Upper lobe of right lung (tissue), 1 donor: ENCODE measurements at regions of chr7 and their contacts with region 1.

Region 1: GRCh38 chr7:134605973-134606923 is 40.4 kb upstream of the BPGM start:
- DNase-seq: no peak
- ATAC-seq: peak; percentile 95
- H3K4me3 ChIP-seq: no peak overlapping the region
- H3K27ac ChIP-seq: no peak overlapping the region
- H3K4me1 ChIP-seq: peaks cover 5% of the 10 kb centered on the region
- H3K27me3 ChIP-seq: peaks cover 10% of the 10 kb centered on the region
- CTCF ChIP-seq: peak; percentile 90

Region 2: GRCh38 chr7:134432296-134433152 is 173.7 kb before region 1 on chr7:
- intact Hi-C with region 1: loop called (anchors 10 kb)
- DNase-seq: peak; percentile 85
- ATAC-seq: peak; percentile 99
- H3K4me3 ChIP-seq: peak overlapping the region; percentile 43
- H3K27ac ChIP-seq: peak overlapping the region; percentile 79
- H3K4me1 ChIP-seq: peaks cover 12% of the 10 kb centered on the region
- H3K27me3 ChIP-seq: no peaks in the 10 kb centered on the region
- CTCF ChIP-seq: peak; percentile 77

Region 3: DNA sequence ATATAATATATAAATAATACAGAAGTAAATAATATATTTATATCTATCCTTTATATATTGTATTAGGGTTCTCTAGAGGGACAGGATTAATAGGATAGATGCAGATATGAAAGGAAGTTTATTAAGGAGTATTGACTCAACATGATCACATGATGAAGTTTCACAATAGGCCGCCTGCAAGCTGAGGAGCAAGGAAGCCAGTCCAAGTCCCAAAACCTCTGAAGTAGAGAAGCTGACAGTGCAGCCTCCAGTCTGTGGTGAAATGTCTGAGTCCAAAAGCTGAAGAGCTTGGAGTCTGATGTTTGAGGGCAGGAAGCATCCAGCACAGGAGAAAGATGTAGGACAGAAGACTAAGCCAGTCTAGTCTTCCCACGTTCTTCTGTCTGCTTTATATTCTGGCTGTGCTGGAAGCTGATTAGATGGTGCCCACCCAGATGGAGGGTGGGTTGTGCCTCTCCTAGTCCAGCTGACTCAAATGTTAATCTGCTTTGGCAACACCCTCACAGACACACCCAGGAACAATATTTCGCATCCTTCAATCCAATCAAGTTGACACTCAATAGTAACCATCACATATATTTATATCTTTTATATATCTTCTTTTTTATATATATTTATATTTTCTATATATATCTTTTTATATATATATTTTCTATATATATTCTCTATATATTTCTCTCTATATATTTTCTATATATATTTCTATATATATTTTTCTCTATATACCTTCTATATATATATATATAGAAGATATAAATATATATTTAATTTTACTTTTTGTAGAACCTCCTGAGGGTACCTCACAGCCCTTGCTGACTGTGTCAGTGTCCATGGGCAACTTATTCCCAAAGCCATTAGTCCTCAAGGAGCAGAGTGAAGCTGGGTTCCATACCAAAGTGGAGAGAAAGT is 103.5 kb before region 1 on chr7:
- intact Hi-C with region 1: no loop called
- DNase-seq: no peak
- ATAC-seq: peak; percentile 75
- H3K4me3 ChIP-seq: no peak overlapping the region
- H3K27ac ChIP-seq: no peak overlapping the region
- H3K4me1 ChIP-seq: no peaks in the 10 kb centered on the region
- H3K27me3 ChIP-seq: no peaks in the 10 kb centered on the region
- CTCF ChIP-seq: no peak

Region 4: DNA sequence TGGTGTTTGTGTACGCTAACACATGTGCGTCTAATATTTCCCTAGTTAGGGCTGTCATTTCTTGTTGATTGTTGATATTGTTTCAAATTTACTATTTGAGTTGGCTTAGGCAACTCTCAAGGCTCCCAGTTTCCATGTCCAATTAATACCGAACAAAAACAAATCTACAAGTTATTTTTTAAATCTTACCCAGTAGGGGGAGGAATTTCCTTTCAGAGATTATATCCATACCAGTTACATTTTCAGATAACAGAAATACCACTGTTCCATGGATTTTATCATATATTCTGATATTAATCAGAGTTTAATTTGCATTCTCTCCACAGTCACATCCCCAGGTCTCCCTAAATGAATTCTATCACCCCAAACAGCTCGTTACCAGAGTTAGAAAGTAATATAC is 86.1 kb before region 1 on chr7:
- intact Hi-C with region 1: loop called (anchors 5 kb)
- DNase-seq: no peak
- ATAC-seq: no peak
- H3K4me3 ChIP-seq: no peak overlapping the region
- H3K27ac ChIP-seq: no peak overlapping the region
- H3K4me1 ChIP-seq: no peaks in the 10 kb centered on the region
- H3K27me3 ChIP-seq: peaks cover 9% of the 10 kb centered on the region
- CTCF ChIP-seq: no peak